Activated CD8-positive, alpha-beta T cell treated with anti-CD3 and anti-CD28 coated beads, Interleukin-2, amount 10 ng/mL, durations not matched to agents 7 days and 5 days (primary cell): ENCODE measurements at regions of chr17 and their contacts with region 1.

Region 1: GRCh38 chr17:1055751-1056645 is 59.1 kb downstream of the TIMM22 start:
- DNase-seq: peak; percentile 62
- ATAC-seq: peak; percentile 71
- H3K4me3 Mint-ChIP-seq: no peak overlapping the region
- H3K27ac Mint-ChIP-seq: peak overlapping the region; percentile 32
- H3K4me1 Mint-ChIP-seq: peaks cover 4% of the 10 kb centered on the region
- H3K27me3 Mint-ChIP-seq: no peaks in the 10 kb centered on the region

Region 2: GRCh38 chr17:1022278-1023024 is 33.5 kb before region 1 on chr17:
- CTCF ChIA-PET with region 1: no interaction called
- POLR2A ChIA-PET with region 1: no interaction called
- DNase-seq: no peak
- ATAC-seq: no peak
- H3K4me3 Mint-ChIP-seq: no peak overlapping the region
- H3K27ac Mint-ChIP-seq: no peak overlapping the region
- H3K4me1 Mint-ChIP-seq: no peaks in the 10 kb centered on the region
- H3K27me3 Mint-ChIP-seq: no peaks in the 10 kb centered on the region

Region 3: GRCh38 chr17:1110862-1111598 is 55.0 kb after region 1 on chr17:
- CTCF ChIA-PET with region 1: interaction called, 10 read pairs
- POLR2A ChIA-PET with region 1: no interaction called
- DNase-seq: no peak
- ATAC-seq: no peak
- H3K4me3 Mint-ChIP-seq: peak overlapping the region; percentile 38
- H3K27ac Mint-ChIP-seq: peak overlapping the region; percentile 64
- H3K4me1 Mint-ChIP-seq: peaks cover 64% of the 10 kb centered on the region
- H3K27me3 Mint-ChIP-seq: no peaks in the 10 kb centered on the region